BJ (cell line): ENCODE measurements at regions of chr6 and their contacts with region 1.

Region 1: DNA sequence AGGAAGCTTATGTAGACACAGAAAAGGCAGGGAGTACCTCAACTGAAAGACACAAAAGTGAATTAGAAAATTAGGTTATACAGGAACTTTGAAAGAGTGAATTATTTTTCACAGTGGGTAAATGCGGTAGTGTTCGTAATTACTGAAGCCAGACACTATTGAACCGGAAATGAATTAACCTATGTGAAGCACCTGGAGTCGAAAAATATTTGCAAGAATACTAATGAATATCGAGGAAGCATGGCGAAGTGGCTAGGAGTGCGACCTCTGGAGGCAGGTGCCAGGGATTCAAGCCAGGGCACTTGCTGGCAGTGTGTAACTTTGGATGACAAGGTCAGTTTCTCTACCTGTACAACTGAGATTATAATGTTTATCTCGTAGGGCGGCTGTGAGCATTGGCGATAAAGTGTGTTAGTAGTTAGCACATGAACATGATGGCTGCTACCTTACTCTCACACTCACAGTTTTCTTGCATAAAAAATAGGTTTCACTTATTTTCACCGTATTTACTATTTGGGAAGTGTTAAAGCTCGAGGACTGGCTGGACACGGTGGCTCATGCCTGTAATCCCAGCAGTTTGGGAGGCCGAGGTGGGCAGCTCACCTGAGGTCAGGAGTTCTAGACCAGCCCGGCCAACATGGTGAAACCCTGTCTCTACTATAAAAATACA is 567 bp upstream of the SLC18B1 start:
- DNase-seq: no peak
- H3K4me3 ChIP-seq: peak overlapping the region; percentile 78
- H3K27me3 ChIP-seq: peaks cover 1% of the 10 kb centered on the region; the same call in 1 of the 2 replicates
- CTCF ChIP-seq: peak; percentile 88

Region 2: DNA sequence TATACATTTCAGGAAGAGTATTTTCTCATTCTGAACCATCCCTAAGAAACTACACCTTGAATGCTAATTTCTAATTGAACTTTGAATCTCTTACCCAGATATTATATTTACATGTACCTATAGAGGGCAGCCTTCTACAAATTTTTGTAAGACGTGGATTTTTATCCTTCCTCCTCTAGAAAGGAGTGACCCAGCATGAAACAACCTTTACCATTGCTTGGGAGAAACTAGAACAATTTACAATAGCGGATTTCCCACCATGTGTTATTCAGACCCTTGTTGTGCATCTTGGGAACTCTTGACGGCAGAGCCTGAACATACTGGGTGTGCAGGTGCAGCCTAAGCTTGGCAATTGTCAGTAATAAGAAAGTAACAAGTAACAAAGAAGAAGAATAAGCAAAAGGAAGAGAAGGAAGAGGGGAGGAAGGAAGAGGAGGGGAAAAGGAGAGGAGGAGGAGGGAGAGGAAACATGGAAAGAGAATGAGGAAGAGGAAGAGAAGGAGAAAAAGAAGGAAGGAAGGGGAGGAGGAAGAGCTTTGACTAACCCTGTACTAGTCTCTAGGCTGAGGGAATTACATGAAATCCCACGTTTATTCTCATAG is 129.2 kb before region 1 on chr6:
- CTCF ChIA-PET with region 1: interaction called, 37 read pairs
- POLR2A ChIA-PET with region 1: no interaction called
- DNase-seq: no peak
- H3K4me3 ChIP-seq: no peak overlapping the region
- H3K27me3 ChIP-seq: no peaks in the 10 kb centered on the region
- CTCF ChIP-seq: peak; percentile 43

Region 3: DNA sequence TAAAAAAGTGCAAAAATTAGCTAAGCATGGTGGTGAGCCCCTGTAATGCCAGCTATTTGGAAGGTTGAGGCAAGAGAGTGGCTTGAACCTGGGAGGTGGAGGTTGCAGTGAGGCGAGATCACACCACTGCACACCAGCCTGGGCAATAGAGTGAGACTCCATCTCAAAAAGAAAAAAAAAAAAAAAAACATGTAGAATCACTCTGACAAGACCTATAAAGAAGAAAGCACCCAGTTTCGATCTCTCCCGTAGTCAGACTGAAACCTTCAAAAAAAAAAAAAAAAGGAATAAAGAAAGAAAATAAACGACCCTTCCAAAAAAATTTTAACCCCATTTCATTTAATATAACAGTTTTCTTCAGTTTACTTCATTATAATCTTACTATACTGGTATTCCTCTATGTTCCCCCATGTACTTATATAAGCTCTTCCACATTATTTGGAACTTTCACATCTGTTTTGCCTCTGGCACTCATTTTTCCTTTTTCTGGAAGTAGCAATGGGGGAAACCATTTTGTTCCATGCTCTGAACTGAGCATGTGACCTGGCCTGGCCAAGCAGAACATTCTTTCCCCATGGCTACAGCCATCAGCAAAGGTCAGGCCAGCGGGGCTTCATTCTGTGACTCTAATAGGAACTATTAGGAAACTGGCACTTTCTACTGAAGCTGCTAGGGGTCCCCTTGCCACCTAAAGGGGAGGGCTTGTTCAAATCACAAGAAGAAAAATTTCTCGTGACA is 10.2 kb before region 1 on chr6:
- CTCF ChIA-PET with region 1: interaction called, 21 read pairs
- POLR2A ChIA-PET with region 1: interaction called, 10 read pairs
- DNase-seq: no peak
- H3K4me3 ChIP-seq: no peak overlapping the region
- H3K27me3 ChIP-seq: no peaks in the 10 kb centered on the region
- CTCF ChIP-seq: no peak

Region 4: DNA sequence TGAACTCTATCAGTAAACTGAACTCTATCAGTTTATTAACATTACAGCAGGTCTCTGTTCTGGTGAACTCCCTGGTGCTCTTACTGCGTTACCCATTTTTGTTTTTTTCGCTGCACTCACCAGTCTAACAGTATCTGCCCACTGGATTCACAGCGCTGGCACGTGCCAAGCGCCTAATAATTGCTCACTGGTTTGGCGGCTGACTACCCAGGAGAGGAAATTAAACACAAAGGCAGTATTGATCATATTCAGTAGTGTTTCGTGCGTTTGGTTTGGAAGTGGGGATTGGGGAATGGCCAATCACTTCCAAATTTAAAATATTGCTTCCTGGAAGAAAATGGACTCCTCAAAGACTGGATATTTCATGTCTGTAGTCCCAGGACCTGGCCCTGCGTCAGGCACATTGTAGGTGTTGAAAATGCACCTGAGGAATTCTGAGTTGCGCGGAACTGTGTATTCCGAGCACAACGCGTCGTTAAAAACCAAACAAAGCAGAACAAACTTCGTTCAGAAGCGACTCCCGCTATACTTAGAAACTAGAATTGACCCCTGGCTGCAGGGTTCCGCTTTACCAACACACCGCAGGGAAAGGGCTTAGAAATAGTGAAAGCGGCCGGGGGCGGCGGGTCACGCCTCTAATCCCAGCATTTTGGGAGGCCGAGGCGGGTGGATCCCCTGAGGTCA is 14.3 kb after region 1 on chr6:
- CTCF ChIA-PET with region 1: interaction called, 36 read pairs
- POLR2A ChIA-PET with region 1: interaction called, 4 read pairs
- DNase-seq: no peak
- H3K4me3 ChIP-seq: peak overlapping the region; percentile 69
- H3K27me3 ChIP-seq: no peaks in the 10 kb centered on the region
- CTCF ChIP-seq: no peak

Region 5: GRCh38 chr6:133062696-133063306 is 263.8 kb after region 1 on chr6:
- CTCF ChIA-PET with region 1: no interaction called
- POLR2A ChIA-PET with region 1: no interaction called
- DNase-seq: no peak
- H3K4me3 ChIP-seq: no peak overlapping the region
- H3K27me3 ChIP-seq: no peaks in the 10 kb centered on the region
- CTCF ChIP-seq: no peak